Endothelial cell of umbilical vein (primary cell): ENCODE measurements at regions of chr11 and their contacts with region 1.

Region 1: GRCh38 chr11:36258730-36259360 is 30.4 kb downstream of the COMMD9 start:
- DNase-seq: peak; percentile 69
- H3K4me3 ChIP-seq: no peak overlapping the region
- H3K27ac ChIP-seq: no peak overlapping the region
- H3K4me1 ChIP-seq: no peaks in the 10 kb centered on the region
- H3K27me3 ChIP-seq: peaks cover 0 to 2% of the 10 kb centered on the region in 2 experiments
- CTCF ChIP-seq: peak; percentile 80 to 86
- POLR2A ChIP-seq: no peak

Region 2: GRCh38 chr11:35617687-35618496 is 641.0 kb before region 1 on chr11 and contains the start of gene FJX1:
- CTCF ChIA-PET with region 1: interaction called, 52 read pairs
- POLR2A ChIA-PET with region 1: no interaction called
- dilution Hi-C with region 1: loop called (anchors 25 kb)
- intact Hi-C with region 1: loop called (anchors 1 kb)
- DNase-seq: peak; percentile 83
- H3K4me3 ChIP-seq: peak within 1 kb of the TSS; percentile 54 to 75 (median 62)
- H3K27ac ChIP-seq: peak within 1 kb of the TSS; percentile 92
- H3K4me1 ChIP-seq: peaks cover 32% of the 10 kb centered on the region
- H3K27me3 ChIP-seq: peaks cover 3 to 18% of the 10 kb centered on the region in 2 experiments
- CTCF ChIP-seq: no peak
- POLR2A ChIP-seq: peak; percentile 32
- total RNA-seq, gene FJX1: 23.7 and 26.6 TPM in 2 replicates

Region 3: DNA sequence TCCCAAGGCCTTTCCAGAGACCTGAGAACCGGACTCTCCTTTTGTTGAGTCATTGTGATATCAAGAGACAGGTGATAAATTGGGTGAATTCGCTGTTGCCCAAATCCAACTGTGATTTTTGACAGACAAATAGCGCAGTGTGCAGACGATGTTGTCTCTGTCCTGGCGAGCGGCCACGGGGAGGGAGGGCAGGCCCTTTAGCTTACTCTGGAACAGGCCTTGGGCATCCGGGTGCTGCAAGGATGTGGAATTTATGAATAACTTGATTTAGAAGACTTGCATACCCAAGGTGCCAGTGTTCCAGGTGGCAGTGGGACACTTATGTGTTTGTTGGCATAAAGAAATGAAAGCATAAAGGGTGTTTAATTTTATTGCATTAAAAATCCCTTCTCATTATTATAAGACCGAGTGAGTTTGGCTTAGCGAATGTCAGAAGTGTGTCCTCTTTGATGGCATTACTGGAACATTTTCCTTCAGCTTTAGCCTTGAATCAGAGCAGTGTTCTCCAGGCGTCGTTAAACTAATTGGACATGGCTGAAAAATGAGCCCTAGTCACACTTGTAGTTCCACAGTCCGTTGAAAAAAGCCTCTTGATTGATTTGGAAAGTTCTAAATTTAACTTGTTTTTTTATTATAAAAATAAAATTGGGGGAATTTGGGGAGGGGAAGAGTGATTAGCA is 305.6 kb before region 1 on chr11:
- CTCF ChIA-PET with region 1: interaction called, 7 read pairs
- POLR2A ChIA-PET with region 1: no interaction called
- dilution Hi-C with region 1: no loop called
- intact Hi-C with region 1: loop called (anchors 5 kb)
- DNase-seq: peak; percentile 42
- H3K4me3 ChIP-seq: no peak overlapping the region
- H3K27ac ChIP-seq: peak overlapping the region; percentile 35
- H3K4me1 ChIP-seq: peaks cover 31% of the 10 kb centered on the region
- H3K27me3 ChIP-seq: no peaks in the 10 kb centered on the region
- CTCF ChIP-seq: no peak
- POLR2A ChIP-seq: no peak

Region 4: DNA sequence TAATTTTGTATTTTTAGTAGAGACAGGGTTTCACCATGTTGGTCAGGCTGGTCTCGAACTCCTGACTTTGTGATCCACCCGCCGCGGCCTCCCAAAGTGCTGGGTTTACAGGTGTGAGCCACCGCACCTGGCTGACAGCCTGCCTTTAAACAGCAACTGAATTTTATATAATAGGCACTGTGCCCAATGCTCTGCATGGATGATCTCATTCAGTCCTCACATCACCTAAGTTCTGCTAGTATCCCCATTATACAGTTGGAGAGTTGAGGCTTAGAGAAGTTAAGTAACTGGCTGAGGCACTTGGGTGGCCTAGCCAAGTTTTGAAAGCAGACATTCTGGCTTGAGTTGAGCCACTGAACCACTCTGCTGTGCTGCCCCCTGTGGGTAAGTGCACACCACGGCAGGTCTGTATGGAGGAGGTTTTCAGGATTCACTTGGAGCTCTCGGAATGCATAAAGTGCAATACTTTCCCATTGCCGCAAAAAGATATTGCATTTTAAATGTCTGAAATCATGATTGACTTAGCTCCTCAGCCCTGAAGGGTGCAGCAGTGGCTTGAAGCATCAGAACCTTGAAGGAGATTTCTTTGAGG is 202.6 kb before region 1 on chr11:
- CTCF ChIA-PET with region 1: interaction called, 27 read pairs
- POLR2A ChIA-PET with region 1: no interaction called
- dilution Hi-C with region 1: no loop called
- intact Hi-C with region 1: loop called (anchors 1 kb)
- DNase-seq: peak; percentile 58
- H3K4me3 ChIP-seq: no peak overlapping the region
- H3K27ac ChIP-seq: no peak overlapping the region
- H3K4me1 ChIP-seq: peaks cover 18% of the 10 kb centered on the region
- H3K27me3 ChIP-seq: no peaks in the 10 kb centered on the region
- CTCF ChIP-seq: peak; percentile 69 to 73
- POLR2A ChIP-seq: no peak

Region 5: GRCh38 chr11:36156161-36156816 is 102.6 kb before region 1 on chr11:
- CTCF ChIA-PET with region 1: interaction called, 38 read pairs
- POLR2A ChIA-PET with region 1: no interaction called
- dilution Hi-C with region 1: no loop called
- intact Hi-C with region 1: loop called (anchors 2 kb)
- DNase-seq: peak; percentile 70
- H3K4me3 ChIP-seq: no peak overlapping the region
- H3K27ac ChIP-seq: peak overlapping the region; percentile 75
- H3K4me1 ChIP-seq: peaks cover 28% of the 10 kb centered on the region
- H3K27me3 ChIP-seq: no peaks in the 10 kb centered on the region
- CTCF ChIP-seq: no peak
- POLR2A ChIP-seq: no peak